ENCODE measurements at regions of chr12 and their contacts with region 1.

Region 1: DNA sequence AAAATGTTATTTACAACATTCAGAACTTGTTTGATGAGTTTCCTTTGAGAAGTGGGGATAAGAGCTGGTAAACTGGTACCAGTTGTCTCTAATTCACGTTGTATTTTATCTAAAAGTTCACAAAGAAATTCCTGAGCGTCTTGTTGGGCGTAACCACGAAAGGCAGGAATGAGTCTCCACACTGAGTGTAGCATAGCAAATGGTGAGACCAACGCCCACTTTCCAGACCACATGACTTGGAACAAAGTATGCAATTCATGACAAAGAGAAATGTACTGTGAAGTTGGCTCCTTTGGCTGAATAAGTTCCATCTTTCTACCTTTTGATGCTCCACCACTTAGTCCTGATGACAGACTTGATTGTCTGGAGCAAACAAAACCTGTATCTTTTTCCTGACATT is 18.4 kb downstream of the USP44 start:
- DNase-seq: no peak
- ATAC-seq: no peak
- H3K4me3 ChIP-seq: no peak overlapping the region
- H3K27ac ChIP-seq: no peak overlapping the region
- H3K4me1 ChIP-seq: no peaks in the 10 kb centered on the region
- H3K27me3 ChIP-seq: no peaks in the 10 kb centered on the region
- CTCF ChIP-seq: no peak

Region 2: GRCh38 chr12:95117178-95117599 is 415.7 kb before region 1 on chr12:
- intact Hi-C with region 1: loop called (anchors 1 to 5 kb)
- DNase-seq: peak in 1 of 2 donors; percentile 81
- ATAC-seq: peak; percentile 80 to 94 (median 92)
- H3K4me3 ChIP-seq: no peak overlapping the region
- H3K27ac ChIP-seq: peak overlapping the region in 2 of 10 donors; percentile 2 to 23
- H3K4me1 ChIP-seq: peaks cover 0 to 26% (median 19%) of the 10 kb centered on the region in 9 donors
- H3K27me3 ChIP-seq: no peaks in the 10 kb centered on the region
- CTCF ChIP-seq: peak; percentile 52 to 84 (median 74)

Region 3: GRCh38 chr12:95336390-95337067 is 196.3 kb before region 1 on chr12:
- intact Hi-C with region 1: loop called in 2 of 10 experiments (anchors 2 to 10 kb)
- DNase-seq: peak; percentile 33 to 76
- ATAC-seq: peak; percentile 87 to 94 (median 93)
- H3K4me3 ChIP-seq: peak overlapping the region in 5 of 10 donors; percentile 2 to 36 (median 21)
- H3K27ac ChIP-seq: peak overlapping the region in 9 of 10 donors; percentile 37 to 69 (median 54)
- H3K4me1 ChIP-seq: peaks cover 0 to 16% (median 9%) of the 10 kb centered on the region in 9 donors
- H3K27me3 ChIP-seq: no peaks in the 10 kb centered on the region
- CTCF ChIP-seq: peak; percentile 71 to 94 (median 89)

Region 4: DNA sequence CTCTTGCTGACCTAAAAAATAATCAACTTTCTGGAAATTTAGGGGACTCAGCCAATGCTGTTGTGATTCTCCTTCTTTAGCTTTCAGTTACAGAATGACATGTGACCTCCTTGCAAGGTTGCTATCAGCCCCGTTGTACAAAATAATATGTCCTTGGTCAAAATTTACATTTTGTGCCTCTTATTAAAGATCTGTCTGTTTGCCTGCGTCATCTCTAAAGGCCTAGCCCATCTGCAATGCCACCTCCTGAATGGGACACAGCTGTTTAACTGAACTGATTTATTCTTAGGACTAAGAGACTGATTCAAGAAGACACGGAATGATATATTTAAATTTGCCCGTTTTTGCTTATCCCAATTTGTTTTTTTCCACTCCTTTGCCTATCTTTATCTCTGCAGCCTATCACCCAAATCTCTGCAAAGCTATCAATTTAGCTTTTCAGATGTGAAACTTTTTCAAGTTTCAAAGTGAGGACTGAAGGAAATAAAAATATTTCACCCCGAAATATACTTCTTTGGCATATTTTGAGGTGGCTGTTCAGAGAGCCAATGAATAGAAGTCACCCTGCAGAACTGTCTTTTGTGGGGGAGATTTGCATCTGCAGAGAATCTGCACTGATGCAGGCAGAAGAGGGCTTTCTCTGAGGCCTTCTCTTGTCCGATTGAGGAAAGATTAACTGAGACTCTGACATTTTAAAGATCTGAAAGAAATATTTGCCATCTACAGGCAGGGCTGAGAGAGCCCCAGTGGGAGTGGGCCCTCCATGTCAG is 189.2 kb before region 1 on chr12:
- intact Hi-C with region 1: loop called in 1 of 10 experiments (anchors 10 kb)
- DNase-seq: no peak
- ATAC-seq: no peak
- H3K4me3 ChIP-seq: no peak overlapping the region
- H3K27ac ChIP-seq: no peak overlapping the region
- H3K4me1 ChIP-seq: no peaks in the 10 kb centered on the region
- H3K27me3 ChIP-seq: no peaks in the 10 kb centered on the region
- CTCF ChIP-seq: no peak

Region 5: DNA sequence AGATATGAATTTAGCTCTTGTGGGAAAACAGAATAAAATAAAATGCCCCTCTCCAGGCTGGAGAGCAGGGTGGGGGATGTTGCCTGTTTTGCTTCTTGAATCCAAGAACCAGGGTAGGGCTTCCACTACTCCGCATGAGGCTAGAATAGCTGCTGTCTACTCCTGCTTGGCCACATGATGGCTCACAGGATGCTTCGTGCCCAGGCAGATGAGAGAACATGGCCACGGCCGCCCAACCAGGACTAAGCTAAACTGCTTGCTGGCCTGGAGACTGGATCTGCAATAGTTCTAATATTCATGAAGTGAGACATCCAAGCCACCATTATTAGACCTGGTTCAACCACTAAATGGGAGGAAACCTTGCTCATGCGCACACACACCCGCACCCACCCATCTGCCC is 181.1 kb before region 1 on chr12:
- intact Hi-C with region 1: loop called in 9 of 10 experiments (anchors 5 to 10 kb)
- DNase-seq: peak; percentile 22 to 29
- ATAC-seq: peak; percentile 28 to 96 (median 86)
- H3K4me3 ChIP-seq: no peak overlapping the region
- H3K27ac ChIP-seq: no peak overlapping the region
- H3K4me1 ChIP-seq: no peaks in the 10 kb centered on the region
- H3K27me3 ChIP-seq: no peaks in the 10 kb centered on the region
- CTCF ChIP-seq: peak in 7 of 9 donors; percentile 7 to 49 (median 25)

Region 6: DNA sequence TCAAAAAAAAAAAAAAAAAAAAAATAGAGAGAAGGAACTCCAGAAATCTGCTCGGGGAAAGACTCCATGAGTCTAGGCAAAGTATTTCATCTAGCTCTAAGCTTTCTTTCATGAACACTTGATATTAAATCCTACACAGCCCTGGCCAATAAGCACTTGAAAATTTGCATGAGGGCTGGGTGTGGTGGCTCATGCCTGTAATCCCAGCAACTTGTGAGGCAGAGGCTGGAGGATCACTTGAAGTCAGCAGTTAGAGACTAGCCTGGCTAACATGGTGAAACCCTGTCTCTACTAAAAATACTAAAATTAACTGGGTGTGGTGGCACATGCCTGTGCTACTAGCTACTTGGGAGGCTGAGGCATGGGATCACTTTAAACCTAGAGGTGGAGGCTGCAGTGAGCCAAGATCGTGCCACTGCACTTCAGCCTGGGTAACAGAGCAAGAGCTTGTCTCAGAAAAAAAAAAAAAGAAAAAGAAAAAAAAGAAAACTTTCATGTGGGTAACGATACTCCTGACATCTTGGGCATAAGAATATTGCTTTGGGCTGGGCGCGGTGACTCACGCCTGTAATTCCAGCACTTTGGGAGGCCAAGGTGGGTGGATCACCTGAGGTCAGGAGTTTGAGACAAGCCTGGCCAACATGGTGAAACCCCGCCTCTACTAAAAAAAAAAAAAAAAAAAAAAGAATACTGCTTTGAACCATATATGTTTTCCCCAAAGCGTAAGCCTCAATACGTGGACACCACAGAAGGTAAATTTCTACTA is 71.8 kb before region 1 on chr12:
- intact Hi-C with region 1: no loop called
- DNase-seq: no peak
- ATAC-seq: no peak
- H3K4me3 ChIP-seq: no peak overlapping the region
- H3K27ac ChIP-seq: no peak overlapping the region
- H3K4me1 ChIP-seq: no peaks in the 10 kb centered on the region
- H3K27me3 ChIP-seq: no peaks in the 10 kb centered on the region
- CTCF ChIP-seq: no peak

Measured in heart right ventricle (tissue), 16 donors.